ENCODE measurements at regions of chr5 and their contacts with region 1.

Region 1: GRCh38 chr5:154038707-154039457 is at the starts of genes FAM114A2 and MFAP3:
- DNase-seq: peak; percentile 85 to 91 (median 86)
- H3K4me3 ChIP-seq: peak within 1 kb of the TSS; percentile 59 to 99
- H3K4me3 Mint-ChIP-seq: peak within 1 kb of the TSS; percentile 92 to 99 (median 98)
- H3K27ac ChIP-seq: peak within 1 kb of the TSS; percentile 72
- H3K27ac Mint-ChIP-seq: peak within 1 kb of the TSS; percentile 91 to 99 (median 98)
- H3K4me1 ChIP-seq: peaks cover 44% of the 10 kb centered on the region
- H3K4me1 Mint-ChIP-seq: peaks cover 39 to 59% (median 51%) of the 10 kb centered on the region in 4 donors
- H3K27me3 ChIP-seq: no peaks in the 10 kb centered on the region
- H3K27me3 Mint-ChIP-seq: no peaks in the 10 kb centered on the region
- total RNA-seq, gene FAM114A2: 39.0 to 45.5 TPM
- total RNA-seq, gene MFAP3: 25.4 to 27.4 TPM

Region 2: DNA sequence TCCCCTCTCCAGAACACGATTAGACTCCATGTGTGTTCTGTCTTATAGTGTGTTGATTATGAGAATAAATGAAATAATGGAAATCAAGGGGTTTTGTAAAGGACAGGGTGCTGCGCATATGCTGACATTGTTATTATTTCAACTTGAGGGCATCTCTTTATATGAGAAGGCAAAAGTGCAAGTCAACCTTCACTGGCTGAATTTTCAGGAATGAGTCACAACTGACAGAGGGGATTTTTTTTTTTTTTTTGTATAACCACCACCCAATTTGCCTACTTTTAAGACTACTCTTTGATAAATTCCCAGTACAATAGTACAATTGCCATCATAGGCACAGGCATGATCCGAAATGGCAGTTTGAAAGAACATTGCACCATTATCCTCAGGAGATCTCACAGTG is 1214.6 kb before region 1 on chr5:
- CTCF ChIA-PET with region 1: no interaction called
- POLR2A ChIA-PET with region 1: no interaction called
- intact Hi-C with region 1: no loop called
- DNase-seq: no peak
- H3K4me3 ChIP-seq: no peak overlapping the region
- H3K4me3 Mint-ChIP-seq: no peak overlapping the region
- H3K27ac ChIP-seq: no peak overlapping the region
- H3K27ac Mint-ChIP-seq: no peak overlapping the region
- H3K4me1 ChIP-seq: no peaks in the 10 kb centered on the region
- H3K4me1 Mint-ChIP-seq: no peaks in the 10 kb centered on the region
- H3K27me3 ChIP-seq: no peaks in the 10 kb centered on the region
- H3K27me3 Mint-ChIP-seq: no peaks in the 10 kb centered on the region

Region 3: DNA sequence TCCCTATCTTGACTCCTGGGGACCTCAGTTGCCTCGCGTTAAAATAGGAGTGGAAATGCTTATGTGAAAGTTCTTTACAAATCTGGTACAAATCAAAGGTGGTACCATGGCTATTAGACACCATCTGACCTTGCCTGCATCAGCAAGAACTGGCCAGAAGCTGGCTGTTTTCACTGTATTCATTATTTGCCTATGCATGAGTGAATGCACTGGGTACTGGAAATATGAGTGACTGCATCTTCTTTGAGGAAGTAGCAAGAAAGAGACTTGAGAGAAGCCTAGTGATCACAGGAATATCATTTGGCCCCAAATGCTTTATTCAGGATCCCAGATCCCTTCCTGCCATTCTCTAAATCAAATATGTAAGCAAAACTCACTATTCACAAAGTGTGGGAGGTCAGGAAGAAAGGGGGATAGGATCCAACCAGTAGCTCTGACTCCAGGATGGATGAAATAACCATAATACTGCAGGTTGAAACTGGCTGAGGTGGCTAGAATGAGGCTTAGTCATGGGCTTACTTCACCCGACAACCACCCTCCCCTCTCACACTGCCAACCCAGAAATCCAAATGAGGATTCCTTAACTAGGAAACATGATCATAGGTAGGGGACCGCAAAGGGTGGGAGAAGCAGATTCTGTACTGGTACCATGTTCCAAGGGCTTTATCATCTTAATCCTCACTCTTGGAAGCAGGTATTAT is 56.8 kb before region 1 on chr5:
- CTCF ChIA-PET with region 1: no interaction called
- POLR2A ChIA-PET with region 1: no interaction called
- intact Hi-C with region 1: no loop called
- DNase-seq: no peak
- H3K4me3 ChIP-seq: no peak overlapping the region
- H3K4me3 Mint-ChIP-seq: no peak overlapping the region
- H3K27ac ChIP-seq: no peak overlapping the region
- H3K27ac Mint-ChIP-seq: peak overlapping the region in 1 of 7 donors; percentile 56
- H3K4me1 ChIP-seq: no peaks in the 10 kb centered on the region
- H3K4me1 Mint-ChIP-seq: no peaks in the 10 kb centered on the region
- H3K27me3 ChIP-seq: no peaks in the 10 kb centered on the region
- H3K27me3 Mint-ChIP-seq: no peaks in the 10 kb centered on the region

Region 4: GRCh38 chr5:154049636-154050035 is 10.8 kb after region 1 on chr5:
- CTCF ChIA-PET with region 1: interaction called, 3 read pairs
- POLR2A ChIA-PET with region 1: interaction called, 14 read pairs
- intact Hi-C with region 1: no loop called
- DNase-seq: no peak
- H3K4me3 ChIP-seq: no peak overlapping the region
- H3K4me3 Mint-ChIP-seq: no peak overlapping the region
- H3K27ac ChIP-seq: no peak overlapping the region
- H3K27ac Mint-ChIP-seq: peak overlapping the region in 1 of 7 donors; percentile 10
- H3K4me1 ChIP-seq: peaks cover 13% of the 10 kb centered on the region
- H3K4me1 Mint-ChIP-seq: peaks cover 25 to 58% (median 35%) of the 10 kb centered on the region in 4 donors
- H3K27me3 ChIP-seq: no peaks in the 10 kb centered on the region
- H3K27me3 Mint-ChIP-seq: no peaks in the 10 kb centered on the region

Region 5: DNA sequence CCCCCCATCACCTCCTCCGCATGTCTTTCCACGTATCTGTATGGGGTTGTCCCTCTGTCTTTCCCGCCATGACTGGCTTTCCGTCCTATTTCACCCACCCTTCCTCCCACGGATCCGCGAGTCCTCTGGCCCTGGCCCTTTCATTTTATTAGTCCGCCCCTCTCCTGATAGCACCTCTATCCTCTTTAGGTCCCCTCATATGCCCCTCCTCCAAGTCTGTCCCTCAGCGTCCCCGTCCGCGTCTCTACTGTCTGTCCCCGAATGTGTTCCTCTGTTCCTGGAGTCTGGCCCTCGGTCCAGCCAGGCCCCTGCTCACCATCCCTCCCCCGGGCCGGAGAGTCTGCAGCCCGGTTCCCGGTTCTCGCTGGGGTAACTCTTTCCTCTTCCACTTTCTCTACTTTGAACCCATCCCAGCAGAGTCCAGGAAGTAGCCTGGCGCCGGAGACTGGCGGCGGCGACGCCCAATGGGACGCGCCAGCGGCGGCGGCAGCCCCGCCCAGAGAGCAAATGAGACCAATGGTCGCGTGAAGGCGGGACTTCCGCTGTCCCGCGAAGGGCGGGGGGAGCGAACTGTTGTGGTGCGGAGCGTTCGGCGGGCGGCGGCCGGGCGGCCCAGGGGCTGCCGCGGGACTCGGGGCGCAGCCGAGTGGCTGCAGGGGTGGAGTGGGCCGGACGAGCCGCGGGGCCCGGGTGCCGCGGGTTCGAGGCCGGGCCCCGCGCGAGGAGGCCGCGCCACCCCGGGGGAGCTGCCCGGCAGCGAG is 406.7 kb after region 1 on chr5 and contains the start of gene SAP30L:
- CTCF ChIA-PET with region 1: no interaction called
- POLR2A ChIA-PET with region 1: interaction called, 9 read pairs
- intact Hi-C with region 1: loop called (anchors 1 kb)
- DNase-seq: peak; percentile 93 to 99 (median 96)
- H3K4me3 ChIP-seq: peak within 1 kb of the TSS; percentile 95 to 99
- H3K4me3 Mint-ChIP-seq: peak within 1 kb of the TSS; percentile 97 to 100 (median 99)
- H3K27ac ChIP-seq: peak within 1 kb of the TSS; percentile 66
- H3K27ac Mint-ChIP-seq: peak within 1 kb of the TSS; percentile 83 to 100 (median 96)
- H3K4me1 ChIP-seq: peaks cover 46% of the 10 kb centered on the region
- H3K4me1 Mint-ChIP-seq: peaks cover 40 to 75% (median 52%) of the 10 kb centered on the region in 4 donors
- H3K27me3 ChIP-seq: no peaks in the 10 kb centered on the region
- H3K27me3 Mint-ChIP-seq: no peaks in the 10 kb centered on the region
- total RNA-seq, gene SAP30L: 36.9 to 47.5 TPM

Region 6: DNA sequence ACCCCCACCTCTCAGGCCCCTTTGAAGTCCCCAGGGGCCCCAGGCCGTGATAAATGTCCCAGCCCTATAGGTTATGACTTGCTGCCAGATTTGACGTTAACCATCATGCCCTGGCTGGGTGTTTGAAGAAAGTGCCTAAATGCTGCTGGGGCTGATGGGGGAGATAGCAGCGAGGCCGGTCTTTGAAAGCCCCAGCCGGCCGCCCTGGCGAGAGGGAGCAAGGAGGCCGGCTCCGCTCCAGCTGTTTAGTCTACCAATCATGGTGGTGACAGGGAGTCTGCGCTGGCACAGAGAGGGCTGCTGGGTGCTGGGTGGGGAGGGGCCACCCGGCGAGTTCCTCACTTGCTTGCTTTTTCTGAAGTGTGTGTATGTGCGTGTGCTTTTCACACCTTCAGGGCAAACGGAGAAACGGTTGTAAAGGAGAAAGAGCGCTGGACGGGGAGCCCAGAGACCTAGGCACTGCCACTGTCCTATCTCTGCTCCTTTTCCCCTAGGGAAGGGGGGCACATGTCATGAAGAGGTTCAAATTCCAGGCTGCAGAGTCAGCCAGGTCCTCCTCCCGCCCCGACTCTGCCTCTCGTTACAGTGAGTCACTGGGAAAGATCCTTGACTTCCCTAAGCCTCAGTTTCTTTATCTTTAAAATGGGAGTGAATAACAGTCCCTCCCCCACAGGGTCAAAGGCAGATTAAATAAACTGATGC is 565.2 kb after region 1 on chr5:
- CTCF ChIA-PET with region 1: no interaction called
- POLR2A ChIA-PET with region 1: no interaction called
- intact Hi-C with region 1: no loop called
- DNase-seq: no peak
- H3K4me3 ChIP-seq: no peak overlapping the region
- H3K4me3 Mint-ChIP-seq: peak overlapping the region in 1 of 8 donors; percentile 46
- H3K27ac ChIP-seq: no peak overlapping the region
- H3K27ac Mint-ChIP-seq: no peak overlapping the region
- H3K4me1 ChIP-seq: no peaks in the 10 kb centered on the region
- H3K4me1 Mint-ChIP-seq: peaks cover 0 to 6% (median 0%) of the 10 kb centered on the region in 4 donors
- H3K27me3 ChIP-seq: no peaks in the 10 kb centered on the region
- H3K27me3 Mint-ChIP-seq: peaks cover 30 to 46% of the 10 kb centered on the region in 2 donors

Measured in CD4-positive, alpha-beta memory T cell (primary cell).